CD4-positive, alpha-beta memory T cell (primary cell): ENCODE measurements at regions of chr2 and their contacts with region 1.

Region 1: GRCh38 chr2:227376911-227377396 is 2.2 kb downstream of the TM4SF20 start:
- DNase-seq: no peak
- H3K4me3 ChIP-seq: no peak overlapping the region
- H3K4me3 Mint-ChIP-seq: no peak overlapping the region
- H3K27ac ChIP-seq: no peak overlapping the region
- H3K27ac Mint-ChIP-seq: no peak overlapping the region
- H3K4me1 ChIP-seq: no peaks in the 10 kb centered on the region
- H3K4me1 Mint-ChIP-seq: peaks cover 0 to 4% (median 0%) of the 10 kb centered on the region in 4 donors
- H3K27me3 ChIP-seq: no peaks in the 10 kb centered on the region
- H3K27me3 Mint-ChIP-seq: peaks cover 0 to 6% of the 10 kb centered on the region in 2 donors

Region 2: GRCh38 chr2:227388537-227389011 is 11.6 kb after region 1 on chr2:
- CTCF ChIA-PET with region 1: no interaction called
- POLR2A ChIA-PET with region 1: interaction called, 3 read pairs
- intact Hi-C with region 1: loop called (anchors 1 kb)
- DNase-seq: no peak
- H3K4me3 ChIP-seq: no peak overlapping the region
- H3K4me3 Mint-ChIP-seq: no peak overlapping the region
- H3K27ac ChIP-seq: no peak overlapping the region
- H3K27ac Mint-ChIP-seq: no peak overlapping the region
- H3K4me1 ChIP-seq: no peaks in the 10 kb centered on the region
- H3K4me1 Mint-ChIP-seq: no peaks in the 10 kb centered on the region
- H3K27me3 ChIP-seq: no peaks in the 10 kb centered on the region
- H3K27me3 Mint-ChIP-seq: peaks cover 0 to 3% of the 10 kb centered on the region in 2 donors